ENCODE measurements at regions of chr4 and their contacts with region 1.

Region 1: GRCh38 chr4:84849051-84849640 is 117.3 kb downstream of the WDFY3 start:
- DNase-seq: no peak
- ATAC-seq: no peak
- H3K4me3 ChIP-seq: no peak overlapping the region
- H3K27ac ChIP-seq: peak overlapping the region; percentile 71 to 82 (median 74)
- H3K4me1 ChIP-seq: peaks cover 14 to 47% of the 10 kb centered on the region in 2 donors
- H3K27me3 ChIP-seq: no peaks in the 10 kb centered on the region
- CTCF ChIP-seq: no peak
- POLR2A ChIP-seq: no peak

Region 2: GRCh38 chr4:84726356-84726755 is 122.8 kb before region 1 on chr4:
- in situ Hi-C with region 1: loop called in 1 of 4 experiments (anchors 25 kb)
- intact Hi-C with region 1: no loop called
- DNase-seq: no peak
- ATAC-seq: no peak
- H3K4me3 ChIP-seq: no peak overlapping the region
- H3K27ac ChIP-seq: no peak overlapping the region
- H3K4me1 ChIP-seq: no peaks in the 10 kb centered on the region
- H3K27me3 ChIP-seq: no peaks in the 10 kb centered on the region
- CTCF ChIP-seq: no peak
- POLR2A ChIP-seq: no peak

Region 3: GRCh38 chr4:84750253-84750959 is 98.7 kb before region 1 on chr4:
- in situ Hi-C with region 1: loop called in 1 of 4 experiments (anchors 25 kb)
- intact Hi-C with region 1: loop called (anchors 5 kb)
- DNase-seq: no peak
- ATAC-seq: peak; percentile 65 to 75
- H3K4me3 ChIP-seq: no peak overlapping the region
- H3K27ac ChIP-seq: no peak overlapping the region
- H3K4me1 ChIP-seq: no peaks in the 10 kb centered on the region
- H3K27me3 ChIP-seq: no peaks in the 10 kb centered on the region
- CTCF ChIP-seq: peak; percentile 27 to 71 (median 51)
- POLR2A ChIP-seq: no peak

Region 4: GRCh38 chr4:84894610-84895009 is 45.5 kb after region 1 on chr4:
- in situ Hi-C with region 1: no loop called
- intact Hi-C with region 1: no loop called
- DNase-seq: no peak
- ATAC-seq: no peak
- H3K4me3 ChIP-seq: no peak overlapping the region
- H3K27ac ChIP-seq: no peak overlapping the region
- H3K4me1 ChIP-seq: peaks cover 0 to 7% of the 10 kb centered on the region in 2 donors
- H3K27me3 ChIP-seq: no peaks in the 10 kb centered on the region
- CTCF ChIP-seq: no peak
- POLR2A ChIP-seq: no peak

Measured in gastrocnemius medialis (tissue), 4 donors.